ENCODE measurements at regions of chr9 and their contacts with region 1.

Region 1: GRCh38 chr9:34899535-34900158 is 58.4 kb upstream of the PHF24 start:
- DNase-seq: no peak
- H3K4me3 ChIP-seq: no peak overlapping the region
- CTCF ChIP-seq: peak; percentile 83

Region 2: DNA sequence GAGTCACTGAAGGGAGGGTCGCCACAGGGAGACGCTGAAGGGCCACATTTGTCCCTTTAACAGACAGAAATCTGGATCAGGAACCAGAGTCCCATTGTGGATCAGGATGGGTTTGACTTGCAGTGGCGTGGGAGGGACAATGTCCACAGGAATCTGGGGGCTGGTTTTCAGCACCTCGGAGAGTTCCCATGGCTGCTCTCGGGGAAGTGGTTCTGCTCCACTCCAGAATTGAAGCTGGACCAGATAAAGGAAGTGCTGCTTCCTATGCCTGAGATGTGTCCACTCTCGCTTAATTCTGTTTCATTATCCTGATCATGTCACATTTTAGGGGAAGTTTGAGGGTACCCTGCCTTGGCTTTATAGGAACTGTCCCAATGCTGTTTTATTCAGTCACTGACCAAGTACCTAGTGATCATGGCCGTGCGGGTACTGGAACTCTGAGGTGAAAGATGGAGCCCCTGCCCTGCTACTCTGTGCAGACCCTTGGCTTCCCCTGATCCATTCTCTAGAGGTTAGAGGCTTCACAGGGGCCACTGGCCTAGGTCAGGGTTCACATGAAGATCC is 405.6 kb before region 1 on chr9:
- CTCF ChIA-PET with region 1: no interaction called
- POLR2A ChIA-PET with region 1: no interaction called
- DNase-seq: no peak
- H3K4me3 ChIP-seq: no peak overlapping the region
- CTCF ChIP-seq: no peak

Region 3: DNA sequence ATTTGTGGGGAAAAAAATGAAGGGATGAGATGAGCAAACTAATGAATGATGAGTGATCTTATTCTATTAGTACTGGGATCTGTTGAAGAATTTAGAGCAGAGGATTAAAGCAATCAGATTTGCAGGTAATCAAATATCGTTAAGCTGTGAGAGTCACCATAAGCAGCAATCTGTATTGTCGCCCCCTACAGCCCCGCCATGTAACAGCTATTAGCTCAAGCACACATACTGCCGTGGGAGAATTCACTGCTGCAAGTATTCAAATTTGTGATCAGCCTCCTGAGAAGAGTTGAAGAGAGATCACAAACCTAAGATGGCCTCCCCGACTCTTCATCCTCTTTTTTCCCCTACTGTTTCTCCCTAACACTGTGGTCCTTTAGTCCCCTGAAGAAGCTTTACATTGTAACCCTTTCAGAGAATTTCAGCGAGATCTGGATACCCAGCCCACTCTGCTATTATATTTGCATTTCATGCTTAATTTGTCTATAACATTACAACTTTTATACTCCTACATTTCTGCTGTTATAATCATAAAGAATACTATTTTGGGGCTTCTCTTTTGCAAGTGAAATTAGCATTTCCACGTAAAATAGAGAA is 30.0 kb after region 1 on chr9:
- CTCF ChIA-PET with region 1: interaction called, 12 read pairs
- POLR2A ChIA-PET with region 1: no interaction called
- DNase-seq: no peak
- H3K4me3 ChIP-seq: no peak overlapping the region
- CTCF ChIP-seq: peak; percentile 56

Region 4: GRCh38 chr9:34994260-34994899 is 94.7 kb after region 1 on chr9:
- CTCF ChIA-PET with region 1: interaction called, 39 read pairs
- POLR2A ChIA-PET with region 1: interaction called, 3 read pairs
- DNase-seq: no peak
- H3K4me3 ChIP-seq: no peak overlapping the region
- CTCF ChIP-seq: peak; percentile 78

Region 5: DNA sequence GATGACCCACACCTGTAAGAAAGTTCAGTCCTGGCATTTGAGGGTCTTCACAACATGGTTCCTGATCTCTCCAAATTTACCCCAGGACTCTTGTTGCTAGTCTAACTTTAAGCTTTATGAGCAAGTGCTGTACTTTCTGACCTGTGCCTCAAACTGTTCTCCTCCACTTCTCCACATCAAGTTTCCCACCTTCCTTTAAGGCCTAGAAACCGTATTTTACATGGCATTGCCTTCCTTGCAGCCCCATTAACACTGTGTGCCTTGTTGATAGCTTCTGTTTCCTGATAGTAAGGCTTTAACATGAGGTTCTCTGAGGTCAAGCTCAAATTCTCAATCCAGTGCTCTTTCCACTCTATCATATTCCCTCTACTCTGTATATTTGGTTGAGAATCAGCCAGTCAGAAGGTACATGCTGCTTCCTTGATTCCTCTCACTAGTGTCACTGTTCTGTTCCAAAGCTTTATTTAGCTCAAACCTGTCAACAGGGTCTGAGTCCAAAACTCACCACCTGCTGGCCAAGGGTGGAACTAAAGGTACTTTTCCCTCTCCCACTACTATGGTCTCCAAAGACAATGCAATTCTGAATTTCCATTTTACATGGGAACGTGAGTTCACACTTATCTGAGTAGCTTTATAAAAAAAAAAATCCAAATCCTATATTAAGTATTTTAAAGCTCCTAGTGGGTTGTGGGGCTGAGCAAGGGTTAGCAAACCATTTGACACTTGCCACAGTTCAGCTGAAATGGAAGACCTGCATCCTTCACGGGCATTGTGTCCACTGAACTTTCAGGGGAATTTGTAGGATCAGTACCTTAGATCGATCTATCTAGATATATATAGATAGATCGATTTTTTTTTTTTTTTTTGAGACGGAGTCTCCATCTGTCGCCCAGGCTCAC is 151.7 kb after region 1 on chr9:
- CTCF ChIA-PET with region 1: interaction called, 102 read pairs
- POLR2A ChIA-PET with region 1: interaction called, 4 read pairs
- DNase-seq: no peak
- H3K4me3 ChIP-seq: no peak overlapping the region
- CTCF ChIP-seq: peak; percentile 65

Region 6: DNA sequence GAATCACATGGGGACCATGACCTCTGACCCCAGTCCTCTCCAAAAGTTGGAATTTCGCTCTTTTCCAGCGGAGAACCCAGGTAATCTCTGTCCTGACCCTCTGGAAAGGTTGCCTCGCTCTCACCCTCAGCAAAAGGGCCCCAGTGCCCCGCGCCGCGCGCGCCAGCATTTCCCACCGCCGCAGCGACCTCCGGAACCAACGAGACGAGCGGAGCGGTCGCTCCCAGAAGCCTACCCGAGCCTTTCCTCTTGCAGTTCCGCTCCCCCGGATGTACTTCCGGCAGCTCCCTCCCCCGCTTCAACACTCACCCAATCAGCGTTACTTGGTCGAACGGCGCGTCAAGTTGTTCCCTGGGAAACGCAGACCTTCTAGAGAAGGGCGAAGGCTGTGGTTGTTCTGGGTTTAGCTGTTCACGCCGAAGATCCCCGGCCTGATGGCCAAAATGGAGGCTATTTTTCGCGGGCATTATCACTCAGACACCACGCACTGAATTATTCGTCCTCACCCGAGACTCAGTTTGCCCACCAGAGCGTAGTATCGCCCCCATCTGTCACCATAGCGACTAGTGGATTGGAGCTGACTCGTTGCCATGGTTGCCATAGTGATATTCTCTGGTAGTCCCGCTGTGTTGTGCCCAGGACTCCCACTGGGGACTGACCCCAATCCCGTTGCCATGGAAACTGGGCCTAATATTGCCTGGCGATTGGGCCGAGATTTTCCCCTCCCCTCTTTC is 203.4 kb after region 1 on chr9 and contains the start of gene STOML2:
- CTCF ChIA-PET with region 1: interaction called, 209 read pairs
- POLR2A ChIA-PET with region 1: no interaction called
- DNase-seq: peak; percentile 73
- H3K4me3 ChIP-seq: peak within 1 kb of the TSS; percentile 65
- CTCF ChIP-seq: no peak

Region 7: GRCh38 chr9:35179347-35180287 is 280.0 kb after region 1 on chr9:
- CTCF ChIA-PET with region 1: no interaction called
- POLR2A ChIA-PET with region 1: no interaction called
- DNase-seq: no peak
- H3K4me3 ChIP-seq: no peak overlapping the region
- CTCF ChIP-seq: no peak

Region 8: GRCh38 chr9:35385042-35385441 is 485.4 kb after region 1 on chr9:
- CTCF ChIA-PET with region 1: interaction called, 11 read pairs
- POLR2A ChIA-PET with region 1: no interaction called
- DNase-seq: peak; percentile 34
- H3K4me3 ChIP-seq: no peak overlapping the region
- CTCF ChIP-seq: peak; percentile 57